GM12878 (cell line): ENCODE measurements at regions of chr5 and their contacts with region 1.

Region 1: GRCh38 chr5:14108170-14108996 is 34.8 kb upstream of the TRIO start:
- DNase-seq: peak; percentile 44
- ATAC-seq: peak; percentile 92
- H3K4me3 ChIP-seq: peak overlapping the region; percentile 51
- H3K27ac ChIP-seq: peak overlapping the region; percentile 64
- H3K4me1 ChIP-seq: peaks cover 22% of the 10 kb centered on the region
- H3K27me3 ChIP-seq: no peaks in the 10 kb centered on the region
- CTCF ChIP-seq: peak; percentile 75 to 81 (median 77)
- EP300 ChIP-seq: no peak
- POLR2A ChIP-seq: no peak
- RAD21 ChIP-seq: peak; percentile 90

Region 2: GRCh38 chr5:14142827-14143548 is 34.6 kb after region 1 on chr5 and contains the start of gene TRIO:
- CTCF ChIA-PET with region 1: interaction called, 19 read pairs
- POLR2A ChIA-PET with region 1: interaction called, 7 read pairs
- RAD21 ChIA-PET with region 1: interaction called, 26 read pairs
- SMC1A ChIA-PET with region 1: interaction called, 16 read pairs
- in situ Hi-C with region 1: no loop called
- intact Hi-C with region 1: loop called (anchors 1 kb)
- DNase-seq: no peak
- ATAC-seq: peak; percentile 63
- H3K4me3 ChIP-seq: peak within 1 kb of the TSS; percentile 100
- H3K27ac ChIP-seq: peak within 1 kb of the TSS; percentile 70
- H3K4me1 ChIP-seq: peaks cover 14% of the 10 kb centered on the region
- H3K27me3 ChIP-seq: no peaks in the 10 kb centered on the region
- CTCF ChIP-seq: peak; percentile 44 to 56 (median 53); a peak in 5 of 6 replicates
- EP300 ChIP-seq: no peak
- POLR2A ChIP-seq: peak; percentile 73
- RAD21 ChIP-seq: 0 out of 2 replicates have a peak, but pooled peaks have one; percentile 11
- polyA plus RNA-seq, gene TRIO: 5.1 to 5.8 TPM

Region 3: DNA sequence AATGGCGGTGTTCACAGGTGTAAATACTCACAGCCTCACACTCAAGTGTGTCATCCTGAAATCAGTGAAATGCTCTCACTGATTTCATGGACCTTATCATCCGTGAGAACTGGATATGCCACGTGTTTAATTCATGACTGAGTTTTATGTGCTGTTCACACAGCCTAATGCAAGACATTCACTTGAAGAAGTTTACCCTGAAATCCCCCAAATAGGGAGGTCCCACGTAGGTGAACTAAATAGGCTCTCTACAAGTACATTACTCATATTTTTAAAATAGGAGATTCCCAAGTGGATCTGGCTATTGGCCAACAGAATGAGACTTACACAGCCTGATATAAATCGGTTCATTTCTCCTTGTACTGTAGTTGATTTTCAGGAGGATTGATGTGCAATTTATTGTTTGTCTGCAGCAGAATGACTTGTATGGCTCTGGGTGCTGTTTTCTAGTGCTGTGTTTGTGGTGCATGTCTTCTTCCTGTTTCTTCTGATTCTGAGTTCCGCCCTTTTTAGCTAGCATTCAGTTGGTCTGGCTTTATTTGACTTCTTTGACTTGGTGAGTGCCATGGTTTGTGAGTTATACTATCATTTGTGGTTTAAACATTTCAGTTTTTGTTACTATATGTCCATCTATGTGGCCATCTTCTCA is 59.9 kb after region 1 on chr5:
- CTCF ChIA-PET with region 1: no interaction called
- POLR2A ChIA-PET with region 1: interaction called, 3 read pairs
- RAD21 ChIA-PET with region 1: interaction called, 5 read pairs
- SMC1A ChIA-PET with region 1: interaction called, 14 read pairs
- in situ Hi-C with region 1: no loop called
- intact Hi-C with region 1: no loop called
- DNase-seq: no peak
- ATAC-seq: peak; percentile 63
- H3K4me3 ChIP-seq: peak overlapping the region; percentile 50
- H3K27ac ChIP-seq: peak overlapping the region; percentile 91
- H3K4me1 ChIP-seq: peaks cover 41% of the 10 kb centered on the region
- H3K27me3 ChIP-seq: no peaks in the 10 kb centered on the region
- CTCF ChIP-seq: no peak
- EP300 ChIP-seq: no peak
- POLR2A ChIP-seq: peak; percentile 14; the same call in 1 of the 2 replicates
- RAD21 ChIP-seq: no peak

Region 4: DNA sequence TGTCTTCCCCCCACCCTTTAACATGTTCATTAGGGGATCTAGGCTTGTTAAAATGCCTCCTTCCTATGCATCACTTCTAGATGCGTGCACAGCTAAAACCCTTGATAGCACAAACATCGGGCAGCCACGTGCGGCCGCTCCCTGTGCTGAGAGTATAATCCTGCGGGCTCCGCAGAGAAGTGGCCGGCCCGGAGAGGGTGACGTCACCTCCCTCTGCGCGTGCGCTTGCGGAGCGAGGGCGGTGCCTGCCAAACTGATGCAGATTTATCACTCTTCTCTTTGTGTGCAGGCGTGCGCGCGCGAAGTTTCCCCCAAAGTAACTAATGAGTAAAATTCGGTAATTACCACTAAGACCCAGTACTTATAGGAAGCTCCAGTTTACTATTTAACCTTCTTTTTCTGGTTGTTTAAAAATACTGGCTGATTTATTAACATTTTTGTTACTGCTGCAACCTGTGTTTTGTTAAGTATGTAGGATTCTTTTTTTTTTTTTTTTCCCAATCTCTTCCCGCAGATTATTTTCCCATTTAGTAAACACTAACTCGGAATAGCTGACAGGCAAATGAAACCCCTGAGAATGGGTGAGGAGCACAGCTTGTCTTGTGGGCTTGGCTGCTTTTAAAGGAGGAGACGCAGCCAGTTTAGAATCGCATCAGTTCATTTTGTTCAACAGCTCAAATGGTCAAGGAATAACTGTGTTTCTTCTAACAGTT is 156.4 kb after region 1 on chr5:
- CTCF ChIA-PET with region 1: interaction called, 137 read pairs
- POLR2A ChIA-PET with region 1: interaction called, 14 read pairs
- RAD21 ChIA-PET with region 1: interaction called, 52 read pairs
- SMC1A ChIA-PET with region 1: interaction called, 81 read pairs
- in situ Hi-C with region 1: loop called (anchors 5 kb)
- intact Hi-C with region 1: no loop called
- DNase-seq: no peak
- ATAC-seq: peak; percentile 94
- H3K4me3 ChIP-seq: peak overlapping the region; percentile 4
- H3K27ac ChIP-seq: no peak overlapping the region; the same call in 1 of the 2 replicates
- H3K4me1 ChIP-seq: peaks cover 36% of the 10 kb centered on the region
- H3K27me3 ChIP-seq: no peaks in the 10 kb centered on the region
- CTCF ChIP-seq: no peak
- EP300 ChIP-seq: no peak
- POLR2A ChIP-seq: peak; percentile 51; the same call in 1 of the 2 replicates
- RAD21 ChIP-seq: 0 out of 2 replicates have a peak, but pooled peaks have one; percentile 12

Region 5: DNA sequence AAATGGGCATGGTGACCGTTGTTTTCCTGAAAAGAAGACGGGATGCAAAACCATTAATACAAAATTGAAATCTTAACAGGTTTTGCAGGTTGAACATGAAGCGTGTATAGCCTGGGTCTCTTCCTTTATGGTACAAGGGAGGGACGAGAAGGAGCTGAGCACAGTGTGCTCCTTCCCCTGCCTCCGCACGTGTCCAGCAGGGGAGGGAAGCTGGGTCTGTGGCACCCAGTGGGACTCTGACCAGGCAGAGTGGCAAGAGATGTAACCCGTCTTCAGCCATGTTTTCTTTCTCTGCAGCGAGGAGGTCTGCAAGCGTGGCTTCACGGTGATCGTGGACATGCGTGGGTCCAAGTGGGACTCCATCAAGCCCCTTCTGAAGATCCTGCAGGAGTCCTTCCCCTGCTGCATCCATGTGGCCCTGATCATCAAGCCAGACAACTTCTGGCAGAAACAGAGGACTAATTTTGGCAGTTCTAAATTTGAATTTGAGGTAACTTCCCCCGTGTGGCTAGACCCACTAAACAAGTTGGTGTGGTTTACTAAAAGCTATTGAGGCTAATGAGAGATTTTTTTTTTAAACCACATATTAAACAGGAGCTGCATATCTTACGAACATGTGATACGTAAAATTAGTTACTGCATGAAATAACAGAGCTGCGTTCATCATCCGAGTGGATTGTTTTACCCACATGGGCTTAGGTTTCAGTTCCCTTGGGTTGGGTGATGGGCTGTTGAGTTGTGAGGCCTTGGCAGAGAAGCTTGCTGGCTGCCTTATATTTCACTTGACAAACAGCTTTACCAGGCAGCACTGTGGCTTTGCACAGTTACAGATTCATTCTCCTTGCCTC is 178.4 kb after region 1 on chr5:
- CTCF ChIA-PET with region 1: interaction called, 8 read pairs
- POLR2A ChIA-PET with region 1: no interaction called
- RAD21 ChIA-PET with region 1: interaction called, 6 read pairs
- SMC1A ChIA-PET with region 1: interaction called, 16 read pairs
- in situ Hi-C with region 1: no loop called
- intact Hi-C with region 1: no loop called
- DNase-seq: peak; percentile 86
- ATAC-seq: peak; percentile 95
- H3K4me3 ChIP-seq: no peak overlapping the region
- H3K27ac ChIP-seq: peak overlapping the region; percentile 53
- H3K4me1 ChIP-seq: peaks cover 17% of the 10 kb centered on the region
- H3K27me3 ChIP-seq: no peaks in the 10 kb centered on the region
- CTCF ChIP-seq: no peak
- EP300 ChIP-seq: peak; percentile 79 to 90
- POLR2A ChIP-seq: no peak
- RAD21 ChIP-seq: no peak